GM12878 (cell line): ENCODE measurements at regions of chr1 and their contacts with region 1.

Region 1: GRCh38 chr1:117067533-117068370 is 7.6 kb downstream of the TTF2 start:
- DNase-seq: peak; percentile 28
- ATAC-seq: peak; percentile 69
- H3K4me3 ChIP-seq: no peak overlapping the region
- H3K27ac ChIP-seq: 0 out of 2 replicates have a peak overlapping the region, but pooled peaks have one; percentile 29
- H3K4me1 ChIP-seq: peaks cover 12% of the 10 kb centered on the region
- H3K27me3 ChIP-seq: no peaks in the 10 kb centered on the region
- CTCF ChIP-seq: peak; percentile 58 to 77 (median 61)
- EP300 ChIP-seq: no peak
- POLR2A ChIP-seq: no peak
- RAD21 ChIP-seq: peak; percentile 83

Region 2: DNA sequence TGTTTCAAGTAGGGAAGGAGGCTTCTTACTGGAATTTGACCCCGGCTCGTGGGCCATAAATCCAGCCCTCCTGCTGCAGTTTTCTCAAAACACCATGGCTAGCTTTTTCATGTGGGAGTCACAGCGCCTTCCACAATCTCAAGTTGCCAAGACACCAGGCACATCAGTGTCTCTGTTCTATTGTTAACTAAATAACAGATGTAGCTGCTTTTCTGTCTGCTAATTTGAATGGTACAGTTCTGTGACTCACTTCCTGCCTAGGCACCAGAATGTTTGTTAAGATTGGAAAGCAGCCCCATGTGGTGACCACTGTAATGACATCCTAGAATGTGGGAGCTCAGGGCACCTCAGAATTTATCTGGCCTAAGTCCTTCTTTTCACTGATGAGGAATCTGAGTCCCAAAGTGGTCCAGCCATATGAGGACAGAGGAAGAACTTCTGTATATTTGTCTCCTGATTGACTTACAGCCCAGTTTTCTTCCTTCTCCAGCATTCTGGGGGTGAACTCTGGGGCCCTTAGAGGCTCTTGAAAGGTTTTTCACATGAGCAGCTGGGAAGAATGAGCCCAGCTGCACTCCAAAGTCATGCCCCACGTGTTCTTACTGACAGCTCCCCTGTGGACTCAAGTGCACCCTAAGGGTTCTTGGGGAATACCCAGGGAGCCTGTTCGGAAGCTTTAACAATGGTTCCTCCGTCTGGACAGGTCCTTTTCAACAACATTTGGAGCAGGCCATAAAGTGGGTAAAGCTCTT is 26.3 kb after region 1 on chr1:
- CTCF ChIA-PET with region 1: interaction called, 44 read pairs
- POLR2A ChIA-PET with region 1: no interaction called
- RAD21 ChIA-PET with region 1: interaction called, 6 read pairs
- SMC1A ChIA-PET with region 1: interaction called, 6 read pairs
- in situ Hi-C with region 1: no loop called
- intact Hi-C with region 1: no loop called
- DNase-seq: no peak
- ATAC-seq: peak; percentile 91
- H3K4me3 ChIP-seq: no peak overlapping the region
- H3K27ac ChIP-seq: no peak overlapping the region
- H3K4me1 ChIP-seq: no peaks in the 10 kb centered on the region
- H3K27me3 ChIP-seq: no peaks in the 10 kb centered on the region
- CTCF ChIP-seq: peak in 2 of 3 experiments; percentile 13 to 34; a peak in 4 of 6 replicates
- EP300 ChIP-seq: no peak
- POLR2A ChIP-seq: no peak
- RAD21 ChIP-seq: peak; percentile 28

Region 3: DNA sequence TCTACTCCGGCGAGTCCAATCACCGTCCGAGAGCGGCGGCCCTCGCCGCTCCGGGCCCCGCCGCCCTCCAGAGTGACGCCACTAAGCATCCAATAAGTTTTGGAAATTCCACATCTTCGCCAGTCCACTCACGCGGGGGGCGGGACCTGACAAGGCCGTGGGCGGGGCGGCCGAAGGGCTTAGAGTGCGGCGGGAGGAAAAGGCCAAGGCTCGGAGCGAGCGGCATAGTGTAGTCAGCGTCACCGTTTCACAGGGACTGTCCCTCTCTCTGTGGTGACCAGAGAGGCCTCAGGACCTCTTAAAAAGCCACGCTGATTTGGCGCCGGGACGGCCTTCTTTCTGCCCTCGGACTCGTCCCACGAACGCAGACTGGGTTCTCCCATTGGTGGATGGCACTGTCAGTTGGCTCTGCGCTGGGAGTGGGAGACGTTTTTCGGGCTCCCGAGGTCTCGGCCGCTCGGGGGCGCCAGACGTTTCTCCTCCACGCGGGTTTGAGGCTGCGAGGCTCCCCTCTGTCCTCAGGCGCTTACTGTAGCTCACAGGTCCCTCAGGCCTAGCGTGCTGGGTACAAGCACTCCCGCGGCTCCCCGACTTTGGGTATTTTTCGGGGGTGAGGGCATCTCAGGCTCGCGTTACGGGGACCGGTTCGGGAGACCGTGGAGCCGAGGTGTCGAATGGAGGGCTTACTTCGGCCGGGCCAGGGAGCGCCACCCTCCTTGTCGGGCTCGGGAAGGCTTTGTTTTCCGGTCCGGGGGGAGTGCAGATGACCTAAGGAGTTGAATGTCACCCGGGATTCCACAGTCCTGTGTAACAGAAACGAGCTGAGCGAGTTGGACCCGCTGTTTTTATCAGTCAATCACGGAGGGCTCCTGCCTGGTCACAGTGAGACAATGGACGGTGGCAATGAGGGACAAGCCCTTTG is 54.3 kb after region 1 on chr1:
- CTCF ChIA-PET with region 1: interaction called, 167 read pairs
- POLR2A ChIA-PET with region 1: no interaction called
- RAD21 ChIA-PET with region 1: interaction called, 53 read pairs
- SMC1A ChIA-PET with region 1: interaction called, 49 read pairs
- in situ Hi-C with region 1: no loop called
- intact Hi-C with region 1: no loop called
- DNase-seq: peak; percentile 68
- ATAC-seq: peak; percentile 95
- H3K4me3 ChIP-seq: peak overlapping the region; percentile 81
- H3K27ac ChIP-seq: no peak overlapping the region
- H3K4me1 ChIP-seq: no peaks in the 10 kb centered on the region
- H3K27me3 ChIP-seq: peaks cover 0 to 3% of the 10 kb centered on the region in 2 experiments; a peak in 2 of 4 replicates
- CTCF ChIP-seq: peak; percentile 67 to 72 (median 70)
- EP300 ChIP-seq: no peak
- POLR2A ChIP-seq: peak; percentile 57
- RAD21 ChIP-seq: peak; percentile 23; the same call in 1 of the 2 replicates

Region 4: DNA sequence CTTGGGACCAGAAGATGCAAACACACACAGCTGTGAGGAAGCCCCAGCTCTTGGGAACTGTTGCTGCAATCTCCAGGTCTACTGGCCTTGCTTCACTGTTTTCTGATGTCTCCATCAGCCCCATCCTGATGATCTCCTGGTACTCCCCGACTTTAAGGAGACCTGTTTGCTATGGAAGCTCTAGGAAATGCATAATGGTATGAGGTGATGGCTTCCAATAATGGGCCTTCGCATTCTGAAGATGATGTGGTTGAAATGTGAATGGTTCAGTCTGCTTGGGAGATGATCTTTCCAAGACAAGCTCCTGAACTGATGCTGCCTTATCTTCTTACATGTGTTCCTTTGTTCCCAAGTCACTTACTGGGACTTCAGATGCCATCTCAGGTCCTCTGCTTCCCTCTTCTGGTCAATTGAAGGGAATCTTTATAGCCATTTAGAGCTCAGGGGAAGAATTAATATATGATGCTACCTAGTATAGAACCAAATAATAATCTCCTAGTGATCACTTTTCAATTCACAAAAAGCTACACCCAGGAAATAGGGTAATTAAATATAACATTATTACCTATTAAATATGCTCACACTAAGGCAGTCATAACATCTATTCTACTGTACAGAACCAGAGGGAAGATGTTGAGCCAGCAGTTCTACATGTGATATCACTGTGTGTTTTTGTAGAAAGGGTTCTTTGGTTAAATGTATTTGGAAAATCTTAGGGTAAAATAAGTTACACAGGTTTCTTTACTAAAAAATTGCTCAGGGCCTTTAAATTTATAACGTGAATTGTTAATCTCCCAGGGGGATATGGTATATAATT is 216.9 kb after region 1 on chr1:
- CTCF ChIA-PET with region 1: interaction called, 3 read pairs
- POLR2A ChIA-PET with region 1: no interaction called
- RAD21 ChIA-PET with region 1: interaction called, 6 read pairs
- SMC1A ChIA-PET with region 1: interaction called, 3 read pairs
- in situ Hi-C with region 1: no loop called
- intact Hi-C with region 1: loop called (anchors 5 kb)
- DNase-seq: no peak
- ATAC-seq: peak; percentile 56
- H3K4me3 ChIP-seq: no peak overlapping the region
- H3K27ac ChIP-seq: no peak overlapping the region
- H3K4me1 ChIP-seq: no peaks in the 10 kb centered on the region
- H3K27me3 ChIP-seq: no peaks in the 10 kb centered on the region; a peak in 1 of 4 replicates
- CTCF ChIP-seq: peak; percentile 14 to 45 (median 24); a peak in 3 of 6 replicates
- EP300 ChIP-seq: no peak
- POLR2A ChIP-seq: no peak
- RAD21 ChIP-seq: peak; percentile 56